Left cardiac atrium (tissue), 4 donors: ENCODE measurements at regions of chr5 and their contacts with region 1.

Region 1: GRCh38 chr5:173625696-173626504 is 9.4 kb upstream of the BOD1 start:
- DNase-seq: no peak
- ATAC-seq: peak; percentile 38 to 63

Region 2: GRCh38 chr5:173495225-173495904 is 130.5 kb before region 1 on chr5:
- intact Hi-C with region 1: no loop called
- DNase-seq: no peak
- ATAC-seq: no peak

Region 3: GRCh38 chr5:173764321-173765029 is 138.6 kb after region 1 on chr5:
- intact Hi-C with region 1: loop called in 1 of 2 experiments (anchors 10 kb)
- DNase-seq: peak; percentile 90
- ATAC-seq: peak; percentile 61 to 90

Region 4: DNA sequence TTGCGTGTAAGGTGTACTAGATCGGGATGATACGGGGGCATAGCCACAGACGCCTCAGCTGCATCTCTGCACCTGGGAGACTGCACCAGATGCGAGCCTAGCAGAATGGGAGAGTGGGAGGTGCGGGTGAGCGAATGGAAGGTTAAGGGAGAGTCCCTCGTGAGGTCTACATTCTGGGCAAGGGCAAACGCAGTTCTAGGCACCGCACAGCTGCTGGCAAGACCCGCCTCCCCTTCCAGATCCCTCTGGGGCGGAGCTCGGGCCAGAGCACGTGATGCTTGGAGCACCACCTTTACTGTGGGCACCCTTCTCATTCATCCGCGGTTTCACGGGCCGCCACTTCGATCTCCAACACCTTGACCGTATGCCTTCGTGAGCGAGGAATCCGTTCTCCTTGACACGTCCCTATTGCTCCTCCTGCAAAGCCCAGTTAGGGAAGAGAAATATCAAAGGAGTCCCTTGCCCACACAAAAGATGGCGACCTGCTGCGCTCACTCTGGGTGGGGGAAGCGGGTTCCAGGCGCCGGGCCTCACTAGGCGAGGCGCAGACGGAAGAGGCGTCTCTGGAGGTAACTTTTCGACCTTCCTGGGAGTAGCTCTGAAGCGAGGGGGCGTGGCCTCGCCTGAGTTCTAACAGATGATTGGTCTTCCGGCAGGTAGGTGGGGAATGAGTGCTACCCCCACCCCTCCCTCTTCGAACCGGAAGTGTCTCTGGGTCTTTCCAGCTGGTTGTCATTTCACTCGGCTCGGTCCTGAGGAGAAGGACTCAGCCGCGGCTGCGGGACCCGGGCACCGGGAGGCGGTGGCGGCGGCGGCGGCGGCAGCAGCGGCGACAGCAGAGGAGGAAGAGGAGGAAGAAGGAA is 261.9 kb after region 1 on chr5 and contains the start of gene CPEB4:
- intact Hi-C with region 1: no loop called
- DNase-seq: peak; percentile 99
- ATAC-seq: peak; percentile 97 to 98
- total RNA-seq, gene CPEB4: 73.8 to 178 TPM

Region 5: GRCh38 chr5:175466700-175467318 is 1840.9 kb after region 1 on chr5:
- intact Hi-C with region 1: no loop called
- DNase-seq: no peak
- ATAC-seq: peak; percentile 77 to 84